Endothelial cell of umbilical vein (primary cell): ENCODE measurements at regions of chr16 and their contacts with region 1.

Region 1: DNA sequence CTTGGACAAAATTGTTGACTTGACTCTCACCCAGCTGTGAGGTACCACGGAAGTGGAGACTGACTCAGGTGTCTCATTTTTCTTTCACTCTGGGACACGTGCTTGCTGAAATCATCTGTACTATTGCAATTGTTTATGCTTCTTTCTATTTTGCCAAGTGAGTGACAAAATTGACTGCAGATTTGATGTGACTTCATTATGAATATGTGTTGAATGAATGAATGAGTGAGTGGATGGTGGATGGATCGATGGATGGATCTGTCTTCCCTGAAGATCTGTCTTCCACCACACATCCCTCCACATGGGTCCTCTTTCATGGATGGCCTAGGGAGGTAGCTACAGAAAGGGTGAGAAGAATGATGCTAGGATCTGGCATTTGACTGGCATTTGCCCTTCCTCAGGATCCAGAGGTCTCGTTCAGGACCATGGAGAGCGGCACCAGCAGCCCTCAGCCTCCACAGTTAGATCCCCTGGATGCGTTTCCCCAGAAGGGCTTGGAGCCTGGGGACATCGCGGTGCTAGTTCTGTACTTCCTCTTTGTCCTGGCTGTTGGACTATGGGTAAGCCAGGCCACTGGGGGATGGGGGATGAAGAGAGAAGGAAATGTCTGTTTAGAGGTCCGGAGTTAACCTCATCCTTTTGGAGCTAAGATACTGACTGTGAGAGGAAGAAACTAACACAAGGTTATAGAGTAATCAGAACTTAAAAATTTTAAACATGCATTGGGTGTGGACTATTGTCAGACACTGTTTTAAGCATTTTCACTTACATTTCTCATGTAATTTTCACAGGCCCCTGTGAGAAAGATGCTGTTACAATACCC is 12.7 kb downstream of the SLC5A11 start:
- DNase-seq: peak; percentile 49
- H3K4me3 ChIP-seq: no peak overlapping the region
- H3K27ac ChIP-seq: no peak overlapping the region
- H3K4me1 ChIP-seq: peaks cover 8% of the 10 kb centered on the region
- H3K27me3 ChIP-seq: no peaks in the 10 kb centered on the region
- CTCF ChIP-seq: no peak
- POLR2A ChIP-seq: no peak

Region 2: DNA sequence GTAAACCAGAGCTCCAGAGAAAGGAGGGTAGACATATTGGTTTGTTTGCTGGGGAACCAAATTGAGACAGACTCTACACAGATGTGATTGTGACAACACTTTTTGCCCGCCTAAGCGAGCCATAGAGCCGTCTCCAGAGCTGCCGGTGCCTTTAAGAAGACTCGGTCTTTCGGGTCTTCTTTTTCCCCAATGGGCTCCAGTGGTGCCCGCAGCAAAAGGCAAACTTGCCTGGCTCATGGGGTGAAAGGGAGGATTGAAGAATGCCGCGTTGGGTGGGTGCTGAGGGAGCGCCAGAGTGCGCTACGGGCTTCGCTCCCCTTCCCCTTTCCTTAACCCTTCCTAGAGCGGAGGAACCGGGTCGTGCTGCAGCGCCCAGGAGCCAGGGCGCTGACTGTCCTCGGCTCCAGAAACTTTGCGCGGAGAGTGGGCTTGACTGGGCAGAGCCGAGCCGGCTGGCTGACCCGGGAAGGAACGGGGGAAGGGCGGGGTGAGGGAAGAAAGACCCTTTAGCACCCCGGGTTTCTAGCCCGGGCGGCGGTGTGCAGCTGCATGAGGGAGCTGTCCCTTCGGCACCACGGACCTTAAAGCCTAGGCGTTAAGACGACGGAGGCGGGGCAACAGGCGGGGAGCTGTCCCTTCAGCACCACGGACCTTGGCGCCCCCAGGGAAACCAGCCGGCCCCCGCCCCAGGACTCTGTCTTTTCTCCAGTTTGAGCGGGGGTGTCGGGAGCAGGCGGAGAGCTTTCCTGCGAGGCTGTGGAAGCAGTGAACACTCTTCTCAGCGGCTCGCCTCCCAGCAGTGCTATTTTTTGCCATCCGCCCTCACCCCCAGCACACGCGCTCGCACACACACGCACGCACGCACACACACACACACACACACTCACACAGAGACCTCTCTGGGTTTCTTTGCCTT is 602.7 kb before region 1 on chr16 and contains the start of gene CACNG3:
- CTCF ChIA-PET with region 1: no interaction called
- POLR2A ChIA-PET with region 1: no interaction called
- dilution Hi-C with region 1: no loop called
- intact Hi-C with region 1: no loop called
- DNase-seq: peak; percentile 30
- H3K4me3 ChIP-seq: no peak within 1 kb of the TSS
- H3K27ac ChIP-seq: no peak within 1 kb of the TSS
- H3K4me1 ChIP-seq: no peaks in the 10 kb centered on the region
- H3K27me3 ChIP-seq: no peaks in the 10 kb centered on the region
- CTCF ChIP-seq: no peak
- POLR2A ChIP-seq: no peak
- total RNA-seq, gene CACNG3: not detected in 2 replicates

Region 3: GRCh38 chr16:25045696-25046381 is 187.4 kb after region 1 on chr16:
- CTCF ChIA-PET with region 1: no interaction called
- POLR2A ChIA-PET with region 1: no interaction called
- dilution Hi-C with region 1: no loop called
- intact Hi-C with region 1: loop called (anchors 10 kb)
- DNase-seq: peak; percentile 34
- H3K4me3 ChIP-seq: no peak overlapping the region
- H3K27ac ChIP-seq: no peak overlapping the region
- H3K4me1 ChIP-seq: peaks cover 27% of the 10 kb centered on the region
- H3K27me3 ChIP-seq: no peaks in the 10 kb centered on the region
- CTCF ChIP-seq: no peak
- POLR2A ChIP-seq: no peak